ENCODE measurements at regions of chr22 and their contacts with region 1.

Region 1: GRCh38 chr22:23925020-23925606 is 30.9 kb downstream of the MIF start:
- DNase-seq: no peak
- H3K4me3 ChIP-seq: no peak overlapping the region
- H3K27ac ChIP-seq: no peak overlapping the region
- H3K4me1 ChIP-seq: no peaks in the 10 kb centered on the region
- H3K27me3 ChIP-seq: no peaks in the 10 kb centered on the region
- CTCF ChIP-seq: no peak
- POLR2A ChIP-seq: no peak

Region 2: GRCh38 chr22:22692707-22693530 is 1232.2 kb before region 1 on chr22:
- intact Hi-C with region 1: no loop called
- DNase-seq: peak; percentile 17
- H3K4me3 ChIP-seq: no peak overlapping the region
- H3K27ac ChIP-seq: no peak overlapping the region
- H3K4me1 ChIP-seq: no peaks in the 10 kb centered on the region
- H3K27me3 ChIP-seq: no peaks in the 10 kb centered on the region
- CTCF ChIP-seq: peak; percentile 28 to 63 (median 48)
- POLR2A ChIP-seq: no peak

Region 3: DNA sequence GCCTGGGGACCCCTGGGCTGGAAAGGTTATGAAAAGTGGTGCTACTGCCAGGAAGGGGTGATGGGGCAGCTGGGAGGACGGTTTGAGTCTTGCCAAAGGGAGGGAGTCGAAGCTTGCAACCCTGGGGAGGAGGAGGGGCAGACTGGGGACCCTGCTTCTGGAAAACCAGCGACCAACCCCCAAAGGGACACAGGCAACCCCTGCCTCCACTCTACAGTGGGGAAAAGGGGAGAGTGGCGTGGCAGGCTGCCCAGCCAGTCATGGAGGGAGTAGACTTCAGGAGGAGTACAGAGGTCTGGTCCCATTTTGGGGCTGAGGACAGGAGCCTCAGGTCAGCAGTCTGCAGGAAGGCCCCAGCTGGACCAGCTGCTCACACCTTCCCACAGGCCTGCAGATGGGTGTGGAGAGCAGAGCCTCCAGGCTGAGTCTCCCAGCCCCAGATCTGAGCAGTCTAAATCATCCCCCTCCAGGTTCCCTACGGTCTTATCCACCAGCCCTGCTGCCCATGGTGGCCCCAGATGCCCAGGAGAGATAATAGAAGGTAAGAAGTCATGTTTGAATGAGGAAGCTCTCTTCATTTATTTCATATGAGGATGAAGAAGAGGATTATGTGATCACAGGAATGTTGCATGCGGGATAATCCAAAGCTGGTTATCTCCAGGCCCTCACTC is 45.8 kb after region 1 on chr22:
- intact Hi-C with region 1: loop called (anchors 5 kb)
- DNase-seq: no peak
- H3K4me3 ChIP-seq: no peak overlapping the region
- H3K27ac ChIP-seq: no peak overlapping the region
- H3K4me1 ChIP-seq: no peaks in the 10 kb centered on the region
- H3K27me3 ChIP-seq: no peaks in the 10 kb centered on the region
- CTCF ChIP-seq: no peak
- POLR2A ChIP-seq: no peak

Measured in prostate gland (tissue), 2 donors.